H1 (cell line): ENCODE measurements at regions of chr4 and their contacts with region 1.

Region 1: GRCh38 chr4:57037982-57038604 is 59.4 kb downstream of the POLR2B start:
- DNase-seq: peak; percentile 23 to 93
- H3K4me3 ChIP-seq: peak overlapping the region in 1 of 4 experiments; percentile 42; a peak in 1 of 8 replicates
- H3K27ac ChIP-seq: no peak overlapping the region
- H3K4me1 ChIP-seq: no peaks in the 10 kb centered on the region
- H3K27me3 ChIP-seq: no peaks in the 10 kb centered on the region
- CTCF ChIP-seq: peak; percentile 90 to 95 (median 95)
- EP300 ChIP-seq: no peak
- POLR2A ChIP-seq: no peak
- RAD21 ChIP-seq: peak; percentile 96 to 97

Region 2: GRCh38 chr4:57051095-57051494 is 13.0 kb after region 1 on chr4:
- CTCF ChIA-PET with region 1: interaction called, 26 read pairs
- POLR2A ChIA-PET with region 1: interaction called, 3 read pairs
- DNase-seq: no peak
- H3K4me3 ChIP-seq: no peak overlapping the region
- H3K27ac ChIP-seq: no peak overlapping the region
- H3K4me1 ChIP-seq: no peaks in the 10 kb centered on the region
- H3K27me3 ChIP-seq: no peaks in the 10 kb centered on the region
- CTCF ChIP-seq: no peak
- EP300 ChIP-seq: no peak
- POLR2A ChIP-seq: no peak
- RAD21 ChIP-seq: no peak

Region 3: DNA sequence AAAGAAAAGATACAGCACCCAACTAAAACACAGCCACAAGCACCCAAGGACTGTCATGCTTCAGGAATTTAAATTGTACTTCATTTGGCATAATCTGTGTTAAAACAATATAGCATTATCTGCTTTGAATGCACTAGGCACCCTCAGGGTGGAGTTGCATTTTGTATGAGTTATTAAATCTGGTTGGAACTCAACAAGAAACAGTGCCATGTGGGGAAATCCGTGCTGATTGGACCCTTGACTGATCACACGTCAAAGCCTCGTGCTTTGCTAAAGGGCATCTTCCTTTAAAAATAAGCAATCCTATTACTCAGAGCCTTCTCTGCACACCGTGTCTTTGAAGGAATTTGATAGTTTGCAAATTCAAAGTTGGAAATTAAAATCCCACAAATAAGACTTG is 36.7 kb after region 1 on chr4:
- CTCF ChIA-PET with region 1: interaction called, 20 read pairs
- POLR2A ChIA-PET with region 1: no interaction called
- DNase-seq: no peak
- H3K4me3 ChIP-seq: no peak overlapping the region
- H3K27ac ChIP-seq: no peak overlapping the region
- H3K4me1 ChIP-seq: peaks cover 5 to 6% (median 6%) of the 10 kb centered on the region in 4 experiments; a peak in 6 of 7 replicates
- H3K27me3 ChIP-seq: no peaks in the 10 kb centered on the region
- CTCF ChIP-seq: no peak
- EP300 ChIP-seq: no peak
- POLR2A ChIP-seq: no peak
- RAD21 ChIP-seq: no peak

Region 4: DNA sequence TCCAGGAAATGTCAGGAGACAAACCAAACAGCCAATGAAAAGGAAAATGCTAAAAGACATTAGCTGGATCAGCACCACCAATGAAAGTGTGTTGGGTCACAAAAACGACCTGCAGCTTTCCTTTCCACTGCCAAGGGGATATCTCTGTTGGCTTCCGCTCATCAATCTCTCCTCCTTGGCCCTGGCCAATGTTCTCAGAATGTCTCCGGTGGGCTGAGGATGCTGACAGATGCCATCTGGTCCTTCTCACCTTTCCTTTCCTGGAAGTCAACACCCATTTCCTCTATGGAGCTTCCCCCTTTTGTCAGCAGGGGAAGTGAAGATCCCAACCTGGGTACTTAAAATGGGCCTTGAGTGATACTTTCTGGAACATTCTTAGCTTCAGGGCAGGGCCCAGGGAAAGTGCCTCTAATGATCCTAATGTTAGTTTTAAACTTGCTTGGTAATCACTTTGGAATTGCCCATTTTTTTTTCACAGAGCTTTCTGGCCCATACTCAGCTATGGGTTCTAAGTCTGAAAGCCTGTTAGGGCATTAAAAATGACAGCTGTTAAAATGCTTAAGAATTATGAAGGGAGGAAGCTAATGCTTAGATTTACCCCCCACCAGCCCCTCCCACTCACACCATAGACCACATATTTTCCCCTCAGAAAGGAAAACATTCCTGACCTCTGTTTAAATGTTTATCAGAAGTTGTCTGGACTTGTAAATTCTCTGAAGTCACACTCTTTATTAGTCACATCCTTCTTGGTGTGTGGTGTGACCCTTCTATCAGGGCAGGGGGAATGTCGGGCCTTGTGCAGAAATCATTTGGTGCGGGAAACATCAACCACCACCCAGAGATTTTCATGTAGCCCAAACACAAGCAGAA is 42.9 kb after region 1 on chr4:
- CTCF ChIA-PET with region 1: interaction called, 20 read pairs
- POLR2A ChIA-PET with region 1: no interaction called
- DNase-seq: no peak
- H3K4me3 ChIP-seq: no peak overlapping the region
- H3K27ac ChIP-seq: no peak overlapping the region
- H3K4me1 ChIP-seq: peaks cover 5 to 6% (median 6%) of the 10 kb centered on the region in 4 experiments; a peak in 6 of 7 replicates
- H3K27me3 ChIP-seq: no peaks in the 10 kb centered on the region
- CTCF ChIP-seq: no peak
- EP300 ChIP-seq: no peak
- POLR2A ChIP-seq: no peak
- RAD21 ChIP-seq: no peak

Region 5: DNA sequence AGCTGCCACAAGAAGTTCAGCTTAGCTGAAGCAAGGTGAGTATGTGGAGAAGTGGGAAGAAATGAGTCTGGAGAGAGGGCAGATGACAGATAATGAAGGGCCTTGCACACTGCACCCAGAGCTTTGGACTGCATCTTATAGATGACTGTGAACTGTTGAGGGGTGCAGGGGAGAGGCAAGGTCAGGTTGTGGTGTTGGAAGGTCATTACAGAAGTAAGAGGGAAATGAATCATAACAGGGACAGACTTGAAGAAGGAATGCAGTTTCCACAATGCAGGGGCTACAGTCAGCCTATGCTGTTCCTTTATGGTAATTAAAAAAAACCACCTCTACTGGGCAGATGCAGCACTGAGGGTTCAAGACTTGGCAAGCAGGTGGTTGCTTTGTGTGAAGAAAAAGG is 76.9 kb after region 1 on chr4:
- CTCF ChIA-PET with region 1: interaction called, 18 read pairs
- POLR2A ChIA-PET with region 1: no interaction called
- DNase-seq: no peak
- H3K4me3 ChIP-seq: no peak overlapping the region
- H3K27ac ChIP-seq: no peak overlapping the region
- H3K4me1 ChIP-seq: peaks cover 0 to 4% (median 0%) of the 10 kb centered on the region in 4 experiments; a peak in 3 of 7 replicates
- H3K27me3 ChIP-seq: peaks cover 3 to 22% (median 15%) of the 10 kb centered on the region in 4 experiments; a peak in 6 of 7 replicates
- CTCF ChIP-seq: no peak
- EP300 ChIP-seq: no peak
- POLR2A ChIP-seq: no peak
- RAD21 ChIP-seq: no peak

Region 6: GRCh38 chr4:57158221-57158620 is 120.1 kb after region 1 on chr4:
- CTCF ChIA-PET with region 1: interaction called, 87 read pairs
- POLR2A ChIA-PET with region 1: interaction called, 4 read pairs
- DNase-seq: no peak
- H3K4me3 ChIP-seq: no peak overlapping the region
- H3K27ac ChIP-seq: no peak overlapping the region
- H3K4me1 ChIP-seq: peaks cover 0 to 6% (median 2%) of the 10 kb centered on the region in 4 experiments; a peak in 2 of 7 replicates
- H3K27me3 ChIP-seq: peaks cover 0 to 14% (median 2%) of the 10 kb centered on the region in 4 experiments; a peak in 5 of 7 replicates
- CTCF ChIP-seq: 0 out of 4 replicates have a peak, but pooled peaks of 1 of the 3 experiments have one; percentile 10
- EP300 ChIP-seq: no peak
- POLR2A ChIP-seq: no peak
- RAD21 ChIP-seq: peak in 1 of 2 experiments; percentile 37; a peak in 2 of 4 replicates